ENCODE measurements at regions of chr20 and their contacts with region 1.

Region 1: DNA sequence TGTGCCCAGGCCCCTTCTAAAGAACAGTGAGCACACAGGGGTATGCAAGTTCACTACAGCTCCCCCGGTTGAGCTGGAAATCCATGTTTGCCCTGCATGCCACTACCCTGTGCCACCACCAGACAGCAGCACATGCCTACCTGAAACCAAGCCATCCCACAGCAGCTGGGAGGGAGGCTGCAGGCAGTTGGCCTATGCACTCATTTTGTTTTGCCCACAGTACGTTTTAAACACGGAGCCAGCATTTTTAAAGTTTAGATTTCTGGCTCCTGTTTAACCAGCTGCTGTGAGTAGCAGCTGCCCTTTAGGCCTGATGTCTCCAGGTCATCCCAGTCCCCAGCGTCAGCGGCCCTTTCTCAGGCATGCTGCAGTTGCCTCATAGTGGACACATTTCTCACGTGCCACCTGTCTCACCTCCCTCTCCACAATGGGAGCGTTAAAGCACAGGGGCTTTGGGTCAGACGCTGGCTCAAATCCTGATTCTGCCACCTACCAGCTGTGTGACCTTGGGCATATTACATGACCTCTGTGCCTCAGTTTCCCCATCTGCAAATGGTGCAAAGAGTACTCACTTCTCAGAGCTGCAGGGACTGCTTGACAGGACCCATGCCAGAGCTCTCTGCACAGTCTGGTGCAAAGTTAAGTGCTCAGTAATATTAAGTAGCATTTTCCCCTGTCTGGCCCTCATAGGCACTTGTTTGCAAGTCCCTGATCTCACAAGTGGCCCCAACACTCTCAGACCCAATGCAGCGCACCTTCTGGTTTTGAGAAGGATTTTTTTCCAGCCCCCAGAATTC is 8.1 kb upstream of the UBE2V1 start:
- DNase-seq: no peak
- CTCF ChIP-seq: peak; percentile 50

Region 2: DNA sequence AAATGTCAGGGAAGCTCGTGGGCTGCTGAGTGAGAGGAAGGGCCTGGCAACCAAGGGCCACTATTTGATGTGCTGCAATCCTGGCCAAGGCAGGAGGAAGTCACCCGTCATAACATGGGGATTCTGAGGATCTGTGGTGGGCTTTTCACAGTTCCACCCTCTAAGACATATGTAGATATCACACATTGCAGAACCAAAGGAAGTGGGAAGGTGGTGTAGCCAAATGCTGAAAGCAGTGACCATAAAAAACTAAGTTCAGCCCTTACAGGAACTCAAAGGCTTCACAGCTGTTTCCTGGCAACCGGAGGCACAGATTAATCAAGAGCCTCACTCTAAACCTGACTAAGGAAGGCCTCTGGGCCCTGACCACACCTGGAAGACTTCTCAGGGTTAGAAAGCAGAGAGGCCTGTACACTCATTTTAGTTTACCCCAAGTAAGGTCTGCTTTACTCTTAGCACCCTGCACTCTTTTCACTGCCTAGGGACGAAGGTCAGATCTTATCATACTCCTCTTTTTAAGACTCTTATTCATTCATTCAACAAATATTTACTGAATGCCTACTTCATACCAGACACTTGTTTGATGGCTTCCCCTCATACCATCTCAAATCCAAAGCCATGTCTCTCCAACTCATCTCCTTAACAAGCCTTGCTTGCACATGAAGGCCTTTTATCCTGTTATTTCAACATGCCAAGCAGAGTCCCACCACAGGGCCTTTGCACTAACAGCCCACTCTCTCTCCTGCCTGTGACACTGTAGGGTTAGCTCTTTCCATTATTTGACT is 10.8 kb before region 1 on chr20:
- CTCF ChIA-PET with region 1: interaction called, 13 read pairs
- POLR2A ChIA-PET with region 1: no interaction called
- DNase-seq: peak; percentile 51
- CTCF ChIP-seq: no peak

Region 3: GRCh38 chr20:50133474-50134217 is 12.6 kb after region 1 on chr20:
- CTCF ChIA-PET with region 1: interaction called, 29 read pairs
- POLR2A ChIA-PET with region 1: interaction called, 4 read pairs
- DNase-seq: no peak
- CTCF ChIP-seq: no peak

Region 4: DNA sequence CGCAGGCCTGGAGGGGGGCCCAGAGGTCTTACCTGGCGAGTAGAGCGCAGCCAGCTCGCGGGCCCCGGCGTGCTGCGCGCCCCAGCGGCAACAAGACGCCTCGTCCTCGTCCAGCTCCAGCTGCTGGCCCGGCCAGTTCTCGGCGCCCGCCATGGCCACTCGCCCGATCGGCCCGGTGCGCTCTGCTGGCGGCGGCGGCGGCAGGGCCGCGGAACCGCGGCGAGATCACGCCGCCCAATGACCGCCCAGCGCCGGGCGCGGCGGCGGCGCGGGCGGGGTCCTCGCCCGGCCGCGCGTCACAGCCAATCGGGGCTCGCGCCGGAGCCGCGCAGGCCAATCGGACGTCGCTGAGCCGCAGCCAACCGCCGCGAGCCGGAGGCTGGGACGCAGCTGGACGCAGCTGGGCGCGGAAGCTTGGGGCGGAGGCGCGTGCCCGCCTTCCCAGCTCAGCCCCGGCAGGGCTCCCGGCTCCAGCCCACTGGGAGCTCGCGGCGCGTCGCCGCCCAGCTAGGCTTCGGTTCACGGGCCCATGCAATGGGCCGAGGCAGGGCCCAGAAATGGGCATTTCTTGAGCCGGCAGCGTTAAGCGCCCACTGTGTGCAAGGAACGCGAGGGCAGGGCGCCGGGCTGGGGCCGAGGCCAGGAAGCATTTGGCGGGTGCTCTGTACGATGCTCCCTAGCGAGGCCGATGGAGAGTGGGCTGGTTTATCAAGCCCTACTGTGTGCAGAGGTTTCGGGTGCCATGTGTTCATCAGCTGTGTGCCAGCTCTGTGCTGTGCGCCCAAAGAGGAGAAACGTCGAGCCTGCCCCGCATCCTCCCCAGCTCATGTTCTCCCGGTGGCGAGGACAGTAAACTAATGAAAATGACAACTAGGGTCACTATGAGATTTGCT is 32.6 kb after region 1 on chr20 and contains the start of gene PEDS1:
- CTCF ChIA-PET with region 1: interaction called, 17 read pairs
- POLR2A ChIA-PET with region 1: interaction called, 4 read pairs
- DNase-seq: peak; percentile 99
- CTCF ChIP-seq: no peak

Region 5: GRCh38 chr20:50179507-50180016 is 58.5 kb after region 1 on chr20:
- CTCF ChIA-PET with region 1: interaction called, 54 read pairs
- POLR2A ChIA-PET with region 1: no interaction called
- DNase-seq: no peak
- CTCF ChIP-seq: no peak